ENCODE measurements at regions of chr1 and their contacts with region 1.

Region 1: GRCh38 chr1:64584479-64584878 is 114.5 kb downstream of the CACHD1 start:
- DNase-seq: no peak
- ATAC-seq: no peak
- H3K4me3 ChIP-seq: no peak overlapping the region
- H3K27ac ChIP-seq: no peak overlapping the region
- H3K4me1 ChIP-seq: peaks cover 0 to 15% (median 0%) of the 10 kb centered on the region in 12 donors
- H3K27me3 ChIP-seq: no peaks in the 10 kb centered on the region
- CTCF ChIP-seq: peak in 1 of 12 donors; percentile 16
- POLR2A ChIP-seq: no peak

Region 2: GRCh38 chr1:64631346-64632034 is 47.0 kb after region 1 on chr1:
- intact Hi-C with region 1: loop called in 1 of 10 experiments (anchors 10 kb)
- DNase-seq: no peak
- ATAC-seq: no peak
- H3K4me3 ChIP-seq: no peak overlapping the region
- H3K27ac ChIP-seq: no peak overlapping the region
- H3K4me1 ChIP-seq: peaks cover 0 to 35% (median 2%) of the 10 kb centered on the region in 12 donors
- H3K27me3 ChIP-seq: no peaks in the 10 kb centered on the region
- CTCF ChIP-seq: no peak
- POLR2A ChIP-seq: no peak

Measured in heart left ventricle (tissue), 16 donors.